ENCODE measurements at regions of chr4 and their contacts with region 1.

Region 1: DNA sequence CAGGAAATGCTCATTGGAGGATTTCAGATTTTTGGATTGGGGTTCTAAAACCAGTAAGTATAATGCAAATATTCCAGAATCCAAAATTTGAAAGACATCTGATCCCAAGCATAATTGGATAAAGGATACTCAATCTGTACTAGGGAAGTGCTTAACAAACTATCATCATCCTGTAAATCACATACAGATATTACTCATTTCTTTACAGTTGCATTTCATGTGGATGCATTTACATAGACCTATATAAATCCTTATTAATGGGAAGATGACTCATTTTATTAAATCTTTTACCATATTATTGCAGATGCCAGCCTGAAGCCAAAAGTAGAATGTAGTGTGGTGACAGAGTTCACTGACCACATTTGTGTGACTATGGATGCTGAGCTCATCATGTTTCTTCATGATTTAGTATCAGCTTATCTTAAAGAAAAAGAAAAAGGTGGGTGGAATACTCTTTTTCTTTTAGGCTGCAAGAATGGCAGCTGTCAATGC is 22.4 kb upstream of the ADAD1 start:
- DNase-seq: no peak
- ATAC-seq: no peak
- H3K4me3 ChIP-seq: no peak overlapping the region
- H3K27ac ChIP-seq: no peak overlapping the region
- H3K4me1 ChIP-seq: no peaks in the 10 kb centered on the region
- H3K27me3 ChIP-seq: no peaks in the 10 kb centered on the region
- CTCF ChIP-seq: no peak

Region 2: DNA sequence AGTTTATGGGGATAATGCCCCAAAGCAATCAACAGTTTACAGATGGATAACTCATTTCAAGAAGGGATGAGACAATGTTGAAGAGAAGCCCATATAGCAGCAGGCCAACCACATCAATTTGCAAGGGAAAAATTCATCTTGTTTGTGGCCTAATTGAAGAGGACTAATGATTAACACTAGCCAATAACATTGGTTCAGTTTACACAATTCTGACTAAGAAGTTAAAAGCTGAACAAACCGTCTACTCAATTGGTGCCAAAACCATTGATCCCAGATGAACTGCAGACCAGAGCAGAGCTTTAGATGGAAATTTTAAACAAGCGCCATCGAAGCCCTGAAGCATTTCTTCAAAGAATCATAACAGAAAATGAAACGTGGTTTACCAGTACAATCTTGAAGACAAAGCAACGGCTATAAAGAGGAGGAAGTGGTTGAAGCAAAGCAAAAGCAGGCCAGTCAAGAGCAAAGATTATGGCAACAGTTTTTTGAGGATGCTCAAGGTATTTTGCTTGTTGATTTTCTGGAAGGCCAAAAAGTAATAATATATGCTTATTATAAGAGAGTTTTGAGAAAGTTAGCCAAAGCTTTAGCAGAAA is 224.7 kb before region 1 on chr4:
- intact Hi-C with region 1: no loop called
- DNase-seq: no peak
- ATAC-seq: no peak
- H3K4me3 ChIP-seq: no peak overlapping the region
- H3K27ac ChIP-seq: no peak overlapping the region
- H3K4me1 ChIP-seq: no peaks in the 10 kb centered on the region
- H3K27me3 ChIP-seq: no peaks in the 10 kb centered on the region
- CTCF ChIP-seq: no peak

Region 3: DNA sequence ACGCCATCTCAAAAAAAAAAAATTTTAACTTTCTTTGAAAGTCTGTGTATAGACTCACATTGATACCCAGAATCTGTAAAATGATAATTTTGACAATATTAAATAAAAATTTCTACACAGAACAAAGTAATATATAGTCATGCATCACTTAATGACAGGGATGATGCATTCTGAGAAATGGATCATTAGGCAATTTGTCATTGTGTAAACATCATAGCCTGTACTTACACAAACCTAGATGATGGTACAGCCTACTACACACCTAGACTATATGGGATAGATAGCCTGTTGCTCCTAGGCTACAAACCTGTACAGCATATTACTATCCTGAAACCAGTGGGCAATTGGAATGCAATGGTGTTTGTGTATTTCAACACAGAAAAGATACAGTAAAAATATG is 96.5 kb before region 1 on chr4:
- intact Hi-C with region 1: loop called in 1 of 2 experiments (anchors 10 kb)
- DNase-seq: no peak
- ATAC-seq: no peak
- H3K4me3 ChIP-seq: no peak overlapping the region
- H3K27ac ChIP-seq: no peak overlapping the region
- H3K4me1 ChIP-seq: no peaks in the 10 kb centered on the region
- H3K27me3 ChIP-seq: no peaks in the 10 kb centered on the region
- CTCF ChIP-seq: no peak

Measured in psoas muscle (tissue), 8 donors.